ENCODE measurements at regions of chr1 and their contacts with region 1.

Region 1: DNA sequence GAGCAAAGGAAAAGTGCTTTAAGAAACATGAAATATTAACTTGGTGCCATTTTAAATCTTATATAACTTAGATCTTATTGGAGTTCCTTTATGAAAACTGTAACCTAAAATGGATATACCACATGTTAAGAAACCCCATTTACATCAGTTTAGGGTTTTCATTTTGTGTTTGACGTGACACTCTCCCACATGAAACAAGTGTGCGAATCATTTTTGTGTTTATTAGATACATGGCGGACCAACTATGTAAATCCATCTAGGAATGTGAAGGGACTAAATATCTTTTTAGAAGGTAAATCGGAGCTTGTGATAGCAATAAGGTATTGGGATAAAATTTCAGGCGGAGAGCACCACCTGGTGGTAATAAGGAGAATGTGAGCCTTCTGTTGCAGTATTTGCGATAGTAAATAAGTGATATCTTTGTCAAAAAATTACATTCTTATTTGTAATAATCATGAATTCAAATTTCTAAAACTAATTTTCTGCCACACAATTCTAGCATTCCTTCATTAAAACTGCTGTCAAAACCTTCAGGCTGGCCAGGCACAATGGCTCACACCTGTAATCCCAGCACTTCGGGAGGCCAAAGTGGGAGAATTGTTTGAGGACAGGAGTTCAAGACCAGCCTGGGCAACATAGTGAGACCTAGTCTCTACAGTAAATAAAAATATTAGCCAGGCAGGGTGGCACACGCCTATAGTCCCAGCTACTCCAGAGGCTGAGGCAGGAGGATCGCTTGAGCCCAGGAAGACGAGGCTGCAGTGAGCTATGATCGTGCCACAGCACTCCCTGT is 31.3 kb downstream of the SMAP2 start:
- DNase-seq: peak; percentile 64
- H3K4me3 Mint-ChIP-seq: no peak overlapping the region
- H3K27ac Mint-ChIP-seq: peak overlapping the region; percentile 46
- H3K4me1 Mint-ChIP-seq: peaks cover 49% of the 10 kb centered on the region
- H3K27me3 Mint-ChIP-seq: no peaks in the 10 kb centered on the region

Region 2: DNA sequence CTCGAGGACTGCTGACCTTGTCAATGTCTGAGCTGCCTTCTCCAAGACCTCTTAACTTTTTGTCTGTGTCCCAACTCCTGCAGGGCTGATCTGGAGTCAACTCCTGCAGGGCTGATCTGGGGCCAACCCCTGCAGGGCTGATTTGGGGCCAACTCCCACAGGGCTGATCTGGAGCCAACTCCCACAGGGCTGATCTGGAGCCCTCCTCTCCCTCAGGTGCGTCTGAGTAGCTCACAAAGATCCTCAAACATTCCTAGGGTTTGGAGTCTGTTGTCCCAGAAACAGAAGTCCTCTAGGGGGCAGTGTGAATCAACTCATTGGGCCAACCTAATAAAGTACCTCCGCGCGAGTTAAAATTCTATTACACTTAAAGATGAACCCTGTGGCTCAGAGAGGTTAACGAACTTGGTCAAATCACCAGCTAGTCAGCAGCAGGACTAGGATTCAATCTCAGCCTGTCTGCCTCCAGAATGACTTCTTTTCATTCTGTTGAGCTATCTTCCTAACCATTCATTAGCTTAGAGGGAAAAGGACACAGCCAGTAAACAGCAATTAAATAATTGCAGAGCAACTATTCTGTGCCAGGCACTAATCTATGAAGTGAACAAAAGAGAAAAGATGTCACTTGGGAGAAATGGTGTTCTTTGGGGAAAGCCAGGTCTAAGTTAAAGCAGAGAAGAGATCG is 260.8 kb before region 1 on chr1:
- CTCF ChIA-PET with region 1: interaction called, 10 read pairs
- DNase-seq: peak; percentile 64
- H3K4me3 Mint-ChIP-seq: no peak overlapping the region
- H3K27ac Mint-ChIP-seq: no peak overlapping the region
- H3K4me1 Mint-ChIP-seq: peaks cover 12% of the 10 kb centered on the region
- H3K27me3 Mint-ChIP-seq: peaks cover 34% of the 10 kb centered on the region

Region 3: DNA sequence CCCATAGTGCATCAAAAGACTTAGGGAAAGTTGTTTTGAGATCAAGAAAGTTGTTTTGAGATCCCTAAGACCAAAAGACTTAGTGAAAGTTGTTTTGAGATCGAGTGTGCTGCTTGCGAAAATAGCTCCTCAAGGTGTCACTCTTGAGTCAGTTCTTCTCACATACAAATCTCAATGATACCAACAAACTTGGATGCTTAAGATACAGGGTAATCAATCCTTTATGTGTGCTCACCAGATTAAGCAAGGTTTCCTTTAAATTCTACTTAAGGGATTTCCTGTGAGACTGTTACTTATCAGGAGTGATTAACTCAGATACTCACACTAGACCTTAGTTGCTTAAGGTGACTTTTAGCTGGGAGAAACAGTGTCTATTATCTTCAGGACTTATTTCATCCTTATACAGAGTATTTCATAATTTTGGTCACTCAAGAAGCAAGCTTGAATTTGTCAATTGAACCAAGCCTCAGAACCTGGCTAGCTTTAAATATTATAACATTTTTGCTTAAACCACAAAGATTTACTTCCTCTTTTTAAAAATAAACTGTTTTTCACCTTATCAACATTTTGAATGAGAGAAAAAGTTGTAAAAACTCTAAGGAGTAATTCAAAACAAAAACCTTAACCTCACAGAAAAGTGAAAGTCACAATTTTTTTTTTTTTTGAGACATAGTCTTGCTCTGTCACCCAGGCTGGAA is 251.6 kb before region 1 on chr1:
- CTCF ChIA-PET with region 1: interaction called, 12 read pairs
- DNase-seq: peak; percentile 48
- H3K4me3 Mint-ChIP-seq: no peak overlapping the region
- H3K27ac Mint-ChIP-seq: no peak overlapping the region
- H3K4me1 Mint-ChIP-seq: peaks cover 7% of the 10 kb centered on the region
- H3K27me3 Mint-ChIP-seq: peaks cover under 1% of the 10 kb centered on the region

Region 4: DNA sequence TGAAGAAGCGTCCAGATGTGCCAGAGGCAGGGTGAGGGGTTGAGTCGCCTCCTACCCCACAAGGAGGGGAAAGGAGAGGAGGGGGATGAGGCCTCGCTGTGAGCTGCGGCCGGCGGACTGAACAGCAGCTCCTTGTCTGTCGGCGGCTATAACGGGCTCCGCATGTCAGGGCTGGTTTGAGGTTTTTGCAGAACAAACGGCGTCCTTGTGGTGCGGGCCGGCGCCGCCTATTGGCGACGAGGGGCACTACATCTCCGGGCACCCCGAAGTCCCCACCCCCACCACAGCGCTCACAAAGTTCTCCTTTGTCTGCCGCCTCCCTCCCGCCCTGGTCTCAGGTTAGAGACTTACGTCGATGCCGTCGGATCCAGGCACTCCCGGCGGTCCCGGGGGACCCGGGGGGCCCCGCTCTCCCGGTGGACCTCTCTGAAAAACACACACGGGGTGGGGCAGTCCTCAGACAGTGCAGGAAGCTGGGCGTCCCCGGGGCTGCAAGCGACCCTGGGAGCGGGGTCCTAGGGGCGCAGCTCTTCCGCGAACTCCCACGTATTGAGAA is 89.5 kb before region 1 on chr1:
- CTCF ChIA-PET with region 1: interaction called, 29 read pairs
- DNase-seq: peak; percentile 86
- H3K4me3 Mint-ChIP-seq: peak overlapping the region; percentile 61
- H3K27ac Mint-ChIP-seq: peak overlapping the region; percentile 28
- H3K4me1 Mint-ChIP-seq: peaks cover 54% of the 10 kb centered on the region
- H3K27me3 Mint-ChIP-seq: peaks cover 72% of the 10 kb centered on the region

Region 5: GRCh38 chr1:40344597-40344996 is 60.3 kb before region 1 on chr1:
- CTCF ChIA-PET with region 1: interaction called, 54 read pairs
- DNase-seq: peak; percentile 31
- H3K4me3 Mint-ChIP-seq: peak overlapping the region; percentile 3
- H3K27ac Mint-ChIP-seq: peak overlapping the region; percentile 16
- H3K4me1 Mint-ChIP-seq: peaks cover 54% of the 10 kb centered on the region
- H3K27me3 Mint-ChIP-seq: no peaks in the 10 kb centered on the region

Region 6: GRCh38 chr1:40373338-40374283 is 31.3 kb before region 1 on chr1 and contains the start of gene SMAP2:
- CTCF ChIA-PET with region 1: interaction called, 10 read pairs
- DNase-seq: peak; percentile 96
- H3K4me3 Mint-ChIP-seq: peak within 1 kb of the TSS; percentile 95
- H3K27ac Mint-ChIP-seq: peak within 1 kb of the TSS; percentile 98
- H3K4me1 Mint-ChIP-seq: peaks cover 46% of the 10 kb centered on the region
- H3K27me3 Mint-ChIP-seq: peaks cover 5% of the 10 kb centered on the region

Region 7: GRCh38 chr1:40385437-40386358 is 19.2 kb before region 1 on chr1:
- CTCF ChIA-PET with region 1: interaction called, 23 read pairs
- DNase-seq: peak; percentile 77
- H3K4me3 Mint-ChIP-seq: peak overlapping the region; percentile 72
- H3K27ac Mint-ChIP-seq: peak overlapping the region; percentile 99
- H3K4me1 Mint-ChIP-seq: peaks cover 92% of the 10 kb centered on the region
- H3K27me3 Mint-ChIP-seq: no peaks in the 10 kb centered on the region